PC-3 (cell line): ENCODE measurements at regions of chr5 and their contacts with region 1.

Region 1: DNA sequence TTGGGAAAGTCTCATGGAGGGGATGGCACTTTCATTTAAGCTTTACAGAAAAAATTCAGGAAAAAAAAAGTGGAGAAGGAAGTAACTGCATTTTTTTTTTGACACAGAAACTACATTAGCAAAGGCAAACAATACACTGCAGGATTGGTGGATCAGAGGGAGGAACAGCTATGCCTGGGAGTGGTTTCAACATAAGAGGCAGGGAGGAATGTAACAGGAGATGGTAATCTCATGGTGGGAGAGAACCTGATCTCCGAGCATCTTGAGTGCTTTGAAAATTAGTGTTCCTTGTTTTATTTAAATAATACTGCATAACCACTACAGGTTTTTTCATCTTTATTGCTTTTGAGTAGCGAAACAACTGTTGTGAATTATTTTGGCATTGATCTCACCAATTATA is 249.4 kb downstream of the FAM170A start:
- DNase-seq: peak; percentile 31
- ATAC-seq: peak; percentile 48
- H3K4me3 ChIP-seq: no peak overlapping the region
- H3K27ac ChIP-seq: peak overlapping the region; percentile 62
- H3K4me1 ChIP-seq: peaks cover 25% of the 10 kb centered on the region
- H3K27me3 ChIP-seq: no peaks in the 10 kb centered on the region
- CTCF ChIP-seq: no peak

Region 2: GRCh38 chr5:119527351-119527750 is 351.4 kb before region 1 on chr5:
- CTCF ChIA-PET with region 1: no interaction called
- POLR2A ChIA-PET with region 1: no interaction called
- intact Hi-C with region 1: loop called (anchors 1 kb)
- DNase-seq: peak; percentile 77
- ATAC-seq: peak; percentile 89
- H3K4me3 ChIP-seq: no peak overlapping the region; the same call in 1 of the 2 replicates
- H3K27ac ChIP-seq: peak overlapping the region; percentile 76
- H3K4me1 ChIP-seq: peaks cover 29% of the 10 kb centered on the region
- H3K27me3 ChIP-seq: no peaks in the 10 kb centered on the region
- CTCF ChIP-seq: no peak

Region 3: DNA sequence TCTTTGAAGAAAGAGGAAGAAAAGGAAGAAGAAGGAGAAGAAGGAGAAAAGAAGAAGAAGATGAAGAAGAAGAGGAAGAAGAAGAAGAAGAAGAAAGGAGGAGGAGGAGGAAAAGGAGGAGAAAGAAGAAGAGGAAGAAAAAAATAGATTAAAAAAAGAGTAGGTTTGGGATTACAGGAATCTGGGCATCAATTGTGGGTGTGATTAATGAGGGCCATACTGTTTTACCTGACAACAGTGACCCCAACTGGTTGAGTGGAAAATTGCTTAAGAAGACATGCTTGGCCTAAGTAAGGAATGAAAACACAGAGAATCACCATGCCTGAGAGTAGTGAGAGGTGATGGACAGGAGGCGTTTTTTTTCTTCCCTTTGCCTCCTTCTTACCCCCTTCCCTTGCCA is 134.8 kb before region 1 on chr5:
- CTCF ChIA-PET with region 1: no interaction called
- POLR2A ChIA-PET with region 1: no interaction called
- intact Hi-C with region 1: loop called (anchors 5 kb)
- DNase-seq: peak; percentile 65
- ATAC-seq: peak; percentile 62
- H3K4me3 ChIP-seq: no peak overlapping the region
- H3K27ac ChIP-seq: no peak overlapping the region
- H3K4me1 ChIP-seq: peaks cover 3% of the 10 kb centered on the region; the same call in 1 of the 2 replicates
- H3K27me3 ChIP-seq: no peaks in the 10 kb centered on the region
- CTCF ChIP-seq: peak; percentile 70

Region 4: DNA sequence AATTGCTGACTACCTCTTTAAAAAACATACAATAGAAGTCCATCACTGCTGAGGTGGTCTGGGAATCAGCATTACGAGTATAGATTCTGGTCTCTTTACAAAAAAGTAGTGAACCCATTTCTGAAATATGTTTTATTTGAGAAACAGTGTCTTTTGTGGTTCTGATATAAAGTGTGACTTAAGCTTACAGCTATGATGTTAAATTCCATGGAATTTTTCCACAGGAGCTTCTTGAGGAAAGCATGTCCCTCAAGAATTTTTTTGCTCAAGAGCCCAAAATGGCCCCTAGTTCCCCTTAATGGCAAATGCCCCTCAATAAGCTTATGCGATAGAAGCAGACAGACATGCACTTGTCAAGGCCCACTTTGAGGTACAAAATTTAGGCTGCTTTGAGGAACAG is 16.3 kb after region 1 on chr5:
- CTCF ChIA-PET with region 1: no interaction called
- POLR2A ChIA-PET with region 1: no interaction called
- intact Hi-C with region 1: no loop called
- DNase-seq: no peak
- ATAC-seq: no peak
- H3K4me3 ChIP-seq: no peak overlapping the region
- H3K27ac ChIP-seq: no peak overlapping the region
- H3K4me1 ChIP-seq: no peaks in the 10 kb centered on the region
- H3K27me3 ChIP-seq: no peaks in the 10 kb centered on the region
- CTCF ChIP-seq: no peak

Region 5: GRCh38 chr5:120007598-120007997 is 128.9 kb after region 1 on chr5:
- CTCF ChIA-PET with region 1: no interaction called
- POLR2A ChIA-PET with region 1: no interaction called
- intact Hi-C with region 1: loop called (anchors 5 kb)
- DNase-seq: peak; percentile 75
- ATAC-seq: peak; percentile 92
- H3K4me3 ChIP-seq: no peak overlapping the region
- H3K27ac ChIP-seq: peak overlapping the region; percentile 61
- H3K4me1 ChIP-seq: peaks cover 14% of the 10 kb centered on the region
- H3K27me3 ChIP-seq: no peaks in the 10 kb centered on the region
- CTCF ChIP-seq: no peak